ENCODE measurements at regions of chr3 and their contacts with region 1.

Region 1: GRCh38 chr3:58324391-58325390 is 8.0 kb upstream of the PXK start:
- DNase-seq: no peak
- ATAC-seq: peak; percentile 62
- H3K4me3 Mint-ChIP-seq: peak overlapping the region; percentile 29
- H3K27ac Mint-ChIP-seq: peak overlapping the region; percentile 86
- H3K4me1 Mint-ChIP-seq: peaks cover 40% of the 10 kb centered on the region
- H3K27me3 Mint-ChIP-seq: no peaks in the 10 kb centered on the region

Region 2: GRCh38 chr3:58349792-58350626 is 25.3 kb after region 1 on chr3:
- CTCF ChIA-PET with region 1: interaction called, 5 read pairs
- POLR2A ChIA-PET with region 1: interaction called, 3 read pairs
- intact Hi-C with region 1: loop called (anchors 1 kb)
- DNase-seq: no peak
- ATAC-seq: peak; percentile 23
- H3K4me3 Mint-ChIP-seq: no peak overlapping the region
- H3K27ac Mint-ChIP-seq: peak overlapping the region; percentile 19
- H3K4me1 Mint-ChIP-seq: peaks cover 67% of the 10 kb centered on the region
- H3K27me3 Mint-ChIP-seq: no peaks in the 10 kb centered on the region

Region 3: DNA sequence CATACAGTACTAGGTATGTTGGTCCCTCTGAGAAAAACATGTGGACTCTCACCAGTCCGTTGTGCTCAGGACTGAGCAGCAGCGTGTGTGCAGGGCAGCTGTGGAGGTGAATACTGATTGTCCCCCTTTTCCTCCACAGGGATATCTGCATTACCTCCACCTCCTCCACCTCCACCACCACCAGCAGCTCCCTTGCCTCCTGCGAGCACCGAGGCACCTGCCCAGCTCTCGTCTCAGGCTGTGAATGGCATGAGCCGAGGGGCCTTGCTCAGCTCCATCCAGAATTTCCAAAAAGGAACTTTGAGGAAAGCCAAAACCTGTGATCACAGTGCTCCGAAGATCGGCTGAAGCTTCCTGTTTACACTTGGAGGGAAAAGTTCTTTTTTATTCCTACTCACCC is 99.9 kb after region 1 on chr3:
- CTCF ChIA-PET with region 1: no interaction called
- POLR2A ChIA-PET with region 1: no interaction called
- intact Hi-C with region 1: no loop called
- DNase-seq: no peak
- ATAC-seq: no peak
- H3K4me3 Mint-ChIP-seq: no peak overlapping the region
- H3K27ac Mint-ChIP-seq: peak overlapping the region; percentile 35
- H3K4me1 Mint-ChIP-seq: peaks cover 4% of the 10 kb centered on the region
- H3K27me3 Mint-ChIP-seq: no peaks in the 10 kb centered on the region

Region 4: DNA sequence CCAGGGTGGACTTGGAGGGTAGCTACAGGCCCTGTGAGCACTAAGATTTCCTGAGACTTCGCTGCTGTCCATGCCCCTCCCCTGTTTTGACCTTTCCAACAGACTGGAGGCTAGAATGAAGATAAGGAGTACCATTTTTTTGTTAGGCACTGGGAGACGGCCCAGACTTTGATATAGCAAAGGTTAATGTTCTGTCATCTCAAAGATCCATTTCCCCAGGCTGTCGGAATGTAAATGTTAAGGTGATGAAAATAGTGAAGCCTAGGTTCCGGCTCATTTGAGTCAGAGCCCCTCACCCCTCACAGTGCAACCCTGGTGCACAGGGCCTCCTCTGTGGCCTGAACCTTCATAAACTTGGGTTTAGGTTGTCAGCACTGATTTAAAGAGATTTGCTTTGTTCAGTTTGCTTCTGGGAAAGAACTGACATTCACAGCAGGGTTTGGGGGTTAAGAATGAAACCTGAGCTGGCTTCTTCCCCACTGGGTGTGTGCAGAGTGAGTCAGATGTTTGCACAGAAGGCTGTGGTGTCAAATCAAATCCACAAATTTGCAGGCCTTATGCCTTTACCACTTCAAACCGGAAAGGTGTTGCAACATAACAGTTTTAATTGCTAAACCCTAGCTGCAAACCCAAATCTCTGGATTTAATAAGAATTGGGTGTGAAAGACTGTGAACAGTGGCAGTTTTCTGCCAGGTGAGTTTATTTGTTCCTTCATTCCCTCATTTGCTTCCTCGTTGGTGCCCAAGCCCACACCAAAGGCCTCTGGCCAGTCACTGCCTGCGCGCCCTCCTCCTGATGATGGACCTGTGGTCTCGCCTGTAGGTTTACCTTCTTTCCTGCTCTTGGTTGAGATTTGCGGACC is 146.6 kb after region 1 on chr3:
- CTCF ChIA-PET with region 1: interaction called, 3 read pairs
- POLR2A ChIA-PET with region 1: no interaction called
- intact Hi-C with region 1: loop called in 1 of 2 experiments (anchors 1 kb)
- DNase-seq: peak; percentile 82
- ATAC-seq: peak; percentile 96
- H3K4me3 Mint-ChIP-seq: no peak overlapping the region
- H3K27ac Mint-ChIP-seq: peak overlapping the region; percentile 73
- H3K4me1 Mint-ChIP-seq: peaks cover 32% of the 10 kb centered on the region
- H3K27me3 Mint-ChIP-seq: peaks cover 2% of the 10 kb centered on the region

Region 5: GRCh38 chr3:58532794-58533220 is 208.1 kb after region 1 on chr3:
- CTCF ChIA-PET with region 1: interaction called, 3 read pairs
- POLR2A ChIA-PET with region 1: no interaction called
- intact Hi-C with region 1: loop called (anchors 1 to 5 kb)
- DNase-seq: peak; percentile 92
- ATAC-seq: peak; percentile 97
- H3K4me3 Mint-ChIP-seq: no peak overlapping the region
- H3K27ac Mint-ChIP-seq: peak overlapping the region; percentile 67
- H3K4me1 Mint-ChIP-seq: peaks cover 13% of the 10 kb centered on the region
- H3K27me3 Mint-ChIP-seq: no peaks in the 10 kb centered on the region

Region 6: DNA sequence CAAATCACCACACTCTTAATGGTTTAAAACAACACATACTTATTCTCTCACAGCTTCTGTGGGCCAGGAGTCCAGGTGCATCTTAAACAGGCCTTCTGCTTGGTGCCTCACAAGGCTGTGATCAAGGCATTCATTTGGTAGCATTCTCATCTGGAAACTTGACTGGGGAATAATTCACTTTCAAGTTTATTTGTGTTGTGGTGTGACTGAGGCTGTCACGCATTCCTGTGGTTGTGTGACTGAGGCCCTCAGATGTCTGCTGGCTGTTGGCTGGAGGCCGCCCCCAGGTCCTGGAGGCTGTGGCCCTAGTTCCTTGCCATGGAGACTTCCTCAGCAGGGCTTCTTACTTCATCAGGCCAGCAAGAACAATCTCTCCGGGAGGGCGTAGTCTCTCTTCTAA is 358.8 kb after region 1 on chr3:
- CTCF ChIA-PET with region 1: no interaction called
- POLR2A ChIA-PET with region 1: no interaction called
- intact Hi-C with region 1: loop called in 1 of 2 experiments (anchors 5 kb)
- DNase-seq: peak; percentile 65
- ATAC-seq: peak; percentile 68
- H3K4me3 Mint-ChIP-seq: no peak overlapping the region
- H3K27ac Mint-ChIP-seq: no peak overlapping the region
- H3K4me1 Mint-ChIP-seq: peaks cover 11% of the 10 kb centered on the region
- H3K27me3 Mint-ChIP-seq: peaks cover 27% of the 10 kb centered on the region

Measured in activated CD4-positive, alpha-beta T cell treated with anti-CD3 and anti-CD28 coated beads for 36 hours (primary cell).